ENCODE measurements at regions of chr10 and their contacts with region 1.

Region 1: GRCh38 chr10:34637418-34637911 is 177.6 kb downstream of the PARD3 start:
- DNase-seq: peak; percentile 78
- ATAC-seq: peak; percentile 77
- H3K4me3 Mint-ChIP-seq: no peak overlapping the region
- H3K27ac Mint-ChIP-seq: no peak overlapping the region
- H3K4me1 Mint-ChIP-seq: peaks cover 5% of the 10 kb centered on the region
- H3K27me3 Mint-ChIP-seq: peaks cover 2% of the 10 kb centered on the region
- CTCF ChIP-seq: peak; percentile 92

Region 2: DNA sequence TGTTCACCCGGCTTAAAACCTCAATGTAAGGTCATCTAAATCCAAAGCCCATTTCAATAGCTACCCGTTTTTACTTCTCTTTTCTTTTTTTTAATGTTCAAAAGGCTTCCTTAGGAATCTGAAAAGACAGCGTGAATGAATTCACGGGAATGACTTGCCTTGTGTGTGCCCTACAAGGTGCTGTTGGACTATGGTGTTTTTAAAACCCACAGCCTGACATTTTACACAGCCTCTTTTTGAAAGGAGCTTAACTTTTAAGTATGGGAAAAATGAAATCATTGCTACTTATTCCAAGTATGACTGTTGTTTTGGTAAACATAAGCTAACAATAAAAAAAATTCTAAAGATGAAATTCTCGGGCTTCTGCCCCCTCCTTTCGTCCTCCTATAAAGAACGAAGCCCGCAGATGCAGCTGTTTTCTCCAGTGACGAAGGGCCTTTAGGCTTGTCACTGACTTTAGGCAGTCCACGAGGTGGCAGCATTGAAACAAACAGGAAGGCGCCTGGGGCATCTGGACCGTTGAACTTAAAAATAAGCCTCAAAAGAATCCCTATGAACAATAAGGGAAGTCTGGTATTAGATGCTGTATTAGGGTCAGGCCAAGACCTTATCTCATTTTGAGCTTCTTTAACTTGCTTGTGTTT is 1444.3 kb before region 1 on chr10:
- CTCF ChIA-PET with region 1: interaction called, 11 read pairs
- POLR2A ChIA-PET with region 1: no interaction called
- intact Hi-C with region 1: no loop called
- DNase-seq: peak; percentile 85
- ATAC-seq: peak; percentile 82
- H3K4me3 Mint-ChIP-seq: no peak overlapping the region
- H3K27ac Mint-ChIP-seq: no peak overlapping the region
- H3K4me1 Mint-ChIP-seq: no peaks in the 10 kb centered on the region
- H3K27me3 Mint-ChIP-seq: peaks cover 5% of the 10 kb centered on the region
- CTCF ChIP-seq: peak; percentile 82

Region 3: GRCh38 chr10:34522546-34522945 is 114.9 kb before region 1 on chr10:
- CTCF ChIA-PET with region 1: interaction called, 22 read pairs
- POLR2A ChIA-PET with region 1: no interaction called
- intact Hi-C with region 1: loop called (anchors 5 kb)
- DNase-seq: no peak
- ATAC-seq: no peak
- H3K4me3 Mint-ChIP-seq: no peak overlapping the region
- H3K27ac Mint-ChIP-seq: no peak overlapping the region
- H3K4me1 Mint-ChIP-seq: peaks cover 2% of the 10 kb centered on the region
- H3K27me3 Mint-ChIP-seq: peaks cover 1% of the 10 kb centered on the region
- CTCF ChIP-seq: peak; percentile 12

Region 4: DNA sequence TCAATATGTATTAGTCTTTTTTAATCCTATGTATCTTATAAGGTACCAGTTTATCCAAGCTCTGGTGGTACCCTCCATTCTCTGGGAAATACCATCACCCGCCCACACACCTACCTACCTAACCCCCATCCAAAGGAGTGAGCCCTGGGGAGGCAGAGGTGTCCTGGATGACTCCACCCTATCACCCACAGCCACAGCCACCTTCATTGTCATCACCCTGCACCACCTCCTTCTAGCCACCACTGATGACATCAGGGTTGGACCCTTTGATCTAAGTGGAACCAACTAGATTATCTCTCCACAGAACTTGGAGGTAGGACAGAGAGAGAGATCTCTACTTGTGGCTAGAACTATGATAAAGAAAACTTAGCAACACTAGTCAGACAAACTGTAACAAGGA is 81.8 kb before region 1 on chr10:
- CTCF ChIA-PET with region 1: no interaction called
- POLR2A ChIA-PET with region 1: no interaction called
- intact Hi-C with region 1: no loop called
- DNase-seq: no peak
- ATAC-seq: peak; percentile 24
- H3K4me3 Mint-ChIP-seq: no peak overlapping the region
- H3K27ac Mint-ChIP-seq: no peak overlapping the region
- H3K4me1 Mint-ChIP-seq: no peaks in the 10 kb centered on the region
- H3K27me3 Mint-ChIP-seq: no peaks in the 10 kb centered on the region
- CTCF ChIP-seq: no peak

Region 5: GRCh38 chr10:34612446-34612845 is 25.0 kb before region 1 on chr10:
- CTCF ChIA-PET with region 1: interaction called, 10 read pairs
- POLR2A ChIA-PET with region 1: no interaction called
- intact Hi-C with region 1: no loop called
- DNase-seq: no peak
- ATAC-seq: no peak
- H3K4me3 Mint-ChIP-seq: no peak overlapping the region
- H3K27ac Mint-ChIP-seq: no peak overlapping the region
- H3K4me1 Mint-ChIP-seq: no peaks in the 10 kb centered on the region
- H3K27me3 Mint-ChIP-seq: peaks cover 2% of the 10 kb centered on the region
- CTCF ChIP-seq: no peak

Region 6: DNA sequence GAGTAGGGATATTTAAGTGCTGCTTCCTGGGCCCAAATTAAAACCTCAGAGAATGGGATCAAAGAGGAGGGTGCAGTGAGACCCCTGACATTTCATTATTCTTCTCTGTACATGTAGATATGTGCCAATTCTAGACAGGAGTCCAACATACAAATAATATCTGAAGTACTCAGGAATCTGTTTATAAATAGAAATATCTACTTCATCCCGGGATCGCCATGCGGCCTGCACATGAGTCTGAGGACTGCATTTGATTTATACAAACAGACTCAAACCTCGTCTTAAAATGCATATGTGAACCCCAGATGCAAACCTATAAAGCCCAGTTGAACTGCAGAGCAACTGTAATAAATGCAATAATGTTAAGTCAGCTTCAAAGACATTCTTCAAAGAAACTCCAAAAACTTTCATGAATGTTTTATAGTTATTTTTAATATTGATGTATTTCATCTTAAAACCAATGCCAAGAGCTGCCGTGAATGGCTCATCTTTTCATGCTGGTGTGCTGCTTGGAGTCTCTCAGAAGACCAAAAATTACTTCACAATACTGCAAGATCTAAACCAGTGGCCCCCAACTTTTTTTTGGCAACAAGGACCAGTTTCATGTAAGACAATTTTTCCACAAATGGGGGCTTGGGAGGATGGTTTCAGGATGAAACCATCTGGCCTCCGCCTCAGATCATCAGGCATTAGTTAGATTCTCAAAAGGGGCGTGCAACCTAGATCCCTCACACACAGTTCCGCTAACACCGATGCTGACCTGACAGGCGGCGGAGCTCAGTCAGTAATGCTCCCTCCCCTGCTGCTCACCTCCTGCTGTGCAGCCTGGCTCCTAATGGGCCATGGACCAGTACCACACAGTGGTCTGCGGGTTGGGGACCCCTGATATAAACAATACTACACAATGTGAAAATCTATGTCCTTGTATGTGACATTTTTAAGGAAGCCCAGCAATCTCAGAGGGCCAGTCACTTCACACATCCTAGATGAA is 10.7 kb after region 1 on chr10:
- CTCF ChIA-PET with region 1: interaction called, 26 read pairs
- POLR2A ChIA-PET with region 1: no interaction called
- intact Hi-C with region 1: no loop called
- DNase-seq: no peak
- ATAC-seq: no peak
- H3K4me3 Mint-ChIP-seq: no peak overlapping the region
- H3K27ac Mint-ChIP-seq: no peak overlapping the region
- H3K4me1 Mint-ChIP-seq: no peaks in the 10 kb centered on the region
- H3K27me3 Mint-ChIP-seq: peaks cover 1% of the 10 kb centered on the region
- CTCF ChIP-seq: no peak